ENCODE measurements at regions of chr17 and their contacts with region 1.

Region 1: DNA sequence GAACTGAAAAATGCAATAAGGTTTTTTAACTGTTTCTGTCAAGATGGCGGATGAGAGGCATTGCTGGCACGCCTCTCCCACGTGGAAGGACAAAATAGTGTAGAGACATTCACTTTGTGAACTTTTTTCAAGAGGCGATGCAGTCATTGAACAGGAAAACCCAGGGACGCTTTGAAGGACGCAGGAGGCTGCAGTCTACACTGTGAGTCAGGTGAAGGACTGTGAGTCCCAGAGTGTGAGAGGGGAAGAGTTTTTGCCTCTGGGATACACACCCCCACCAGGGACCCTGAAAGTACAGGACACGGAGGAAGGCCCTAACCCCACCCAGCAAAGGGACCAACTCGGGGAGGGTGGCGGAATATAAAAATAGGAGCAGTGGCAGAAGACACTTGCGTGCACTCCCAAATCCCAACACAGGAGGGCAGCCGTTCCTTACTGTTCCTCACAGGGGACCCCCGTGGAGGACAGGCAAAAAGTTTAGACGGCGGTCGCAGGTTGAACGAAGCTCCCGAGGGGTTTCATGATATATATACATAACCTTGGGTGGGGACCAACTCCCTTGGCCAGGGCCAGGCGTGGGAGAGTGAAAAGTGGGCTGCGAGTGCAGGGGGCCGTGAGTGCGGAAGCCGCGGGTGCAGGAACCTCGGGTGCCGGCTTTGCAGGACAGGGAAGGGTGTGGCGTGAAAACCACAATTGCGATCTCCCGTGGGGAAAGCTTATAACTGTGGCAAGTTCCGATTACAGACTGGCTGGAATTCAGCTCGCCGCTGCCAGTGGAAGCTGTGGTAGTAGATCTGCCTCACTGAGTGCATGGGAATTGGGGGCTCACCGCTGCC is 82.0 kb upstream of the ALOX12 start:
- DNase-seq: peak; percentile 46
- H3K4me3 ChIP-seq: no peak overlapping the region
- H3K27ac ChIP-seq: no peak overlapping the region
- H3K4me1 ChIP-seq: no peaks in the 10 kb centered on the region
- H3K27me3 ChIP-seq: no peaks in the 10 kb centered on the region
- CTCF ChIP-seq: peak; percentile 31 to 75 (median 64)
- POLR2A ChIP-seq: no peak

Region 2: DNA sequence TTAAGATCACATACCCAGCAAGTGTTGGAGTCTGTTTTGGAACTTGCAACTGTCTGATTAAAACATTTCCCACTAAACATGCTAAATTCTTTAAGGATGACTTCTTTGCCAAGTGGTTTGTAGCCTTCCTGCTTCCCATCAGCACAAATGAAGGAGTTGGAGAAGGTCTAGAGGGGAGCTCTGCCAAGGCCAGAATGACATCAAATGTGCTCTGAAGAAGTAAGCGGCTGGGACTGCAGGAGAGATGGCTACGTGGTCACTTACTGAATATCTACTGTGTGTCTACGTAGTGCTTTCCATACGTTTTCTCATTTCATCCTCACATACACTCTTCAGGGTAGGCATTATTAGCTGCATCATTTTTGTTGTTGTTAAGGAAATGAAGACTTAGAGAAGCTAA is 1193.8 kb before region 1 on chr17:
- intact Hi-C with region 1: no loop called
- DNase-seq: no peak
- H3K4me3 ChIP-seq: no peak overlapping the region
- H3K27ac ChIP-seq: no peak overlapping the region
- H3K4me1 ChIP-seq: no peaks in the 10 kb centered on the region
- H3K27me3 ChIP-seq: peaks cover 2% of the 10 kb centered on the region
- CTCF ChIP-seq: no peak
- POLR2A ChIP-seq: no peak

Region 3: DNA sequence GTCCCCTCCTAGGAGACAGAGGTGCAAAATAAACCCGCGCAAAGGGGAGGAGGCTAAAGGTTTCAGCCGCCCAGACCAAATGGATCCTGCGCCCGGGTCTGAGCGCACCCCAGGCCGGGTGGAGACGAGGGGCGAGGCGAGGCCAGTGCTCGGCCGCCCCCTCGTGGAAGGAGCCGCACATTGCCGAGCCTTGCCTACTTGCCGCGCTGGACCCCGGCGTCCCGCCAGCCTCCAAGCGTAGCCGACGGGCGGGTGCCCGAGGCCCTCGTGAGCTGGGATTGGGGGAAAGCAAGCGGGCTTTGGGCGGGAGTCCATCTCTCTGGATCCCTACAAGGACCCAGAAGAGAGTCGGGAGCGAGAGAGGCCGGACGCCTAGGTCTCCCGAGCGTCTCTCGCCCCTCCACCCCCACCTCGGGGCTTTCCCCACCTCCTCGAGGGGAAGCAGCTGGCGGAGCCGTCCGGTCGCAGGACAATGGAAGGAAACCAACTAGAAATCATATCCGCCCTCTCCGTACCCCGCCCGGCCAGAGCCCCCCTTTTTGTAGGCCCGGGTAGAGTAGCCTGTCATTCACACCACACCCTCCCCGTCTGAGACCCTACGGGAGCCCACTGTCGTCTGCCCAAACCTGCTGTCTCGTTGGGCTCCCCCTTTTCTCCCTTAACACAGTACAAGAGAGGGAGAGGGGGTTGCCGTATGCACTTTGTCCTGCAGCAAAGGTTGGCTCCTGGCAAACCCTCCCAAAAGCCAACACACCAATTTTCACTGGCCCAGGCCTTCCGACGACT is 108.4 kb after region 1 on chr17:
- intact Hi-C with region 1: loop called (anchors 5 kb)
- DNase-seq: peak; percentile 58
- H3K4me3 ChIP-seq: peak overlapping the region; percentile 5 to 8
- H3K27ac ChIP-seq: peak overlapping the region in 1 of 2 donors; percentile 24
- H3K4me1 ChIP-seq: no peaks in the 10 kb centered on the region
- H3K27me3 ChIP-seq: peaks cover 3% of the 10 kb centered on the region
- CTCF ChIP-seq: peak; percentile 82 to 96 (median 88)
- POLR2A ChIP-seq: no peak

Measured in prostate gland (tissue), 2 donors.